Right ventricle myocardium superior (tissue), 1 donor: ENCODE measurements at regions of chr17 and their contacts with region 1.

Region 1: DNA sequence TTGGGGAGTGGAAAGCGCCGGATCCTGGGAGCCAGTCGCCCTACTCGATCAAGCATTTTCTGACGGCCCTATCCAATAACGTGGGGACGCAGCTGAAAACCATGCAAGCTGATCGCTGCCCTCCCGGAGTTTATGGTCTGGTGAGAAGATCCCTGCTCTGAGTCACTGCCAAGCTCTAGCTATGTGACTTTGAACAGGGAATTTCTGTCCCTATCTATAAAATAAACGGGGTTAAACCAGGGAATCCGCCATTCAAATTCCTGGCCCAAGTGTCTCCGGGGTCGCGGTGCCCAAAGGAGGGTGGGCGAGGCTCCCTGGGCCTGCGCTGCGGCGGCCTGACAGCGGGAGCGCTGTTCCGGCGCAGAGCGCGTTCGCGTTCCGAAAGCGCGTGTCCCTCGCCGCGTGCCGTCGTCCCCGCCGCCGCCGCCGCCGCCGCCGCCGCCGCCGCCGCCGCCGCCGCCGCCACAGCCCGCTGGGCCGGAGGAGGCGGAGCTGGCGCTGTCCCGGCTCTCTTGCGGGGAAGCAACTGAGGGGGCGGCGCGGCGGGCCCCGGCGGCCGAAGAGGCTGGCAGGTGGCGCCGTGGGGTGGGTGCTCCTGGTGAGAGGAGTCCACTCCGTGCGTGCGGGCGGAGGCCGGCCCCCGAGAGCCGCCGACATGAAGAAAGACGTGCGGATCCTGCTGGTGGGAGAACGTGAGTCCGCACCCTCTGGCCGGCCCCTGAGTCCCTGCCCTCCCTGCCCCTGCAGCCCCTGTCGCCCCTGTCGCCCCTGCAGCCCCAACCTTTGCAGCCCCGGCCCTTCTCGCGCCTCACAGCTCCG is at the start of gene RHOT1:
- DNase-seq: peak; percentile 84
- ATAC-seq: peak; percentile 76
- total RNA-seq, gene RHOT1: 61.0 TPM

Region 2: DNA sequence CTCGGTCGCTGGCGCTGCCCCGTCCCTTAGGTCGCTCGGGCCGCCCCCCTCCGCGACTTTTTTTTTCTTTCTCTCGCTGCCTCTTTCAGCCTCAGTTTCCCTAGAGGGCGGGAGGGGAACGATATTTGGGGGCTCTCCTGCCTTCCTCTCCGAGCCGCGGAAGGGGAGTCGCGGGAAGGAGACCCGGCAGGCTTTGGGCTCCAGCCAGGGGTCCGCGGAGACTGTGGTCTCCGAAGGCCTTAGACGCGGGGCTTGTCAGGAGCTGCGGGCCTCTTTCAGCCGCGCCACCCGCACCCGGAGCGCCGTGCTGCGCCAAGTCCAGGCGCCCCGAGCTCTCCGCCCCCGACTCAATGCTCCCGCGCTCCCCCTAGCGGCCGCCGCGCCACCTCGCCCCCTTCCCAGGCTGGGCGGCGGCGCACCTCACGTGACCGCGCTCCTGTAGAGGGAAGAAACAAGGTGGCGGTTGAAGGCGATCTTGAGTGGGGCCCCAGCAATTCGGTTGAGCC is 135.2 kb before region 1 on chr17 and contains the start of gene LRRC37B:
- intact Hi-C with region 1: loop called (anchors 10 kb)
- DNase-seq: peak; percentile 94
- ATAC-seq: peak; percentile 99
- total RNA-seq, gene LRRC37B: 3.0 TPM